Naive thymus-derived CD4-positive, alpha-beta T cell (primary cell): ENCODE measurements at regions of chr7 and their contacts with region 1.

Region 1: DNA sequence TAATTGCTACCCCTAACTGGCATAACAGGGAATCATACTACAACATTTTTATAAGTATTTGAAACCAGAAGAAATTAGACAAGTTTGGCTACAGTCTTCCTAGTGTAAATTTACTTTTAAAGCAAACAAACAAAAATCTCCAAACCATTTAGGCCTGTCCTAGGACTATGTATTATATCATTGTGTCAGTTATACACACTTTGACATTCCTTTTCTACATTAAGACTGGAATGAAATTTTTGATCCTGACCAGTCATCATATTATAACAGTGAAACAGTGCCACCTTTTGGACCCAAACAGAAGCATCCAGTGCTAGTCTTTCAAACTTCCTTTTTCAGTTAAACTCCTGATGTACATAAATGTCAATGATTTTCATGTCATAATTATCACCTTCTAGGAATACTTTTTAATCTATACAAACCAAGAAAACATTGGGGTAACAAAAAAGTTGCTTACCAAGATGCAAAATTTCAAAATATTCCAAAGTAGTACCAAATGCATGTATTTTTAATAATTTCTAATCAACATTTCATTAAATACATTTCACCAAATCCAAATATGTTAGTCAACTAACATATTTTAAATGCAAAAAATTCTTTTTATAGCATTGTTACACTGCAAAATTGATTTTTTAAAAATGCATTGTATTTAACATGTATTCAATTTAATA is 75.7 kb downstream of the IMMP2L start:
- DNase-seq: peak in 5 of 9 donors; percentile 12 to 33 (median 29)
- ATAC-seq: no peak
- H3K4me3 ChIP-seq: no peak overlapping the region
- H3K4me3 Mint-ChIP-seq: no peak overlapping the region
- H3K27ac ChIP-seq: no peak overlapping the region
- H3K27ac Mint-ChIP-seq: no peak overlapping the region
- H3K4me1 ChIP-seq: no peaks in the 10 kb centered on the region
- H3K4me1 Mint-ChIP-seq: peaks cover 0 to 3% (median 0%) of the 10 kb centered on the region in 7 donors
- H3K27me3 ChIP-seq: no peaks in the 10 kb centered on the region
- H3K27me3 Mint-ChIP-seq: no peaks in the 10 kb centered on the region

Region 2: DNA sequence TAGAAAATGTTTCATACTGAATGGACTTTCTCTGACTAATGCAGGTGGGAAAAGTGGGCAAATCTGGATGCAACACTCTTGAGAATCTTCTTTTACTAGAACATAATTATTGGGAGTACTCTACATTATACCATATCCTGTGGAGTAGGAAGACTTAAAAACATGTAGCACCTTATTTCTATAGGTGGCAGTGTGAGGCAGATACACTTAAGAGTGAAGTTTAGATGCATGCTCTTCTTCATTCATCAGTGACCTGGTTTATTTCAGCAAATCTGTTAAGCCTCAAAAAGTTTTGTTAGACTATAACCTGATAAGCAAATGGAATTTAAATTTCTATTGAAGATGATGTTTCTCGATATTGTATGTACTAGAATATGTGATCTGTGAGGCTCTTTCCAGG is 1482.8 kb before region 1 on chr7:
- CTCF ChIA-PET with region 1: no interaction called
- POLR2A ChIA-PET with region 1: no interaction called
- intact Hi-C with region 1: loop called in 1 of 2 experiments (anchors 2 kb)
- DNase-seq: no peak
- ATAC-seq: no peak
- H3K4me3 ChIP-seq: no peak overlapping the region
- H3K4me3 Mint-ChIP-seq: no peak overlapping the region
- H3K27ac ChIP-seq: no peak overlapping the region
- H3K27ac Mint-ChIP-seq: no peak overlapping the region
- H3K4me1 ChIP-seq: no peaks in the 10 kb centered on the region
- H3K4me1 Mint-ChIP-seq: no peaks in the 10 kb centered on the region
- H3K27me3 ChIP-seq: no peaks in the 10 kb centered on the region
- H3K27me3 Mint-ChIP-seq: peaks cover 0 to 7% (median 0%) of the 10 kb centered on the region in 5 donors

Region 3: DNA sequence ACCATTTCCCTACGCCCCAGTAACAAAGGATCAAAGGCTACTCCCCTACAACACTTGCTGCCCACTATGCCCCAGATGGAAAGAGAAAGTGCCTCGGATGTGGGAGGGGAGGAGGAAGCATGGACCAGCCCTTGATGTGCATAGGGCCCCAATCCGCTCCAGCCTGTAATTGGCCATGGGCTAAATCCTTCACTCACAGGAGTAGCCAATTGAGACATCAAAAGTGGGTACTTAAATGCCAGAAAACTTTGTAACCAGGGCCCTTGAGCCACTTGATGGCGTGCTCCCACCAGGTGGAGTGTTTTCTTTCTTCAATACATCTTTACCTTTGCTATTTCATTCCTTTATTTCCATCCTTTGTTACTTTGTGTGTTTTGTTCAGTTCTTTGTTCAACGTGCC is 896.2 kb before region 1 on chr7:
- CTCF ChIA-PET with region 1: no interaction called
- POLR2A ChIA-PET with region 1: no interaction called
- intact Hi-C with region 1: loop called (anchors 1 to 2 kb)
- DNase-seq: peak in 4 of 9 donors; percentile 4 to 11 (median 10)
- ATAC-seq: no peak
- H3K4me3 ChIP-seq: no peak overlapping the region
- H3K4me3 Mint-ChIP-seq: no peak overlapping the region
- H3K27ac ChIP-seq: no peak overlapping the region
- H3K27ac Mint-ChIP-seq: no peak overlapping the region
- H3K4me1 ChIP-seq: no peaks in the 10 kb centered on the region
- H3K4me1 Mint-ChIP-seq: peaks cover 0 to 7% (median 0%) of the 10 kb centered on the region in 7 donors
- H3K27me3 ChIP-seq: no peaks in the 10 kb centered on the region
- H3K27me3 Mint-ChIP-seq: peaks cover 0 to 4% (median 0%) of the 10 kb centered on the region in 5 donors

Region 4: GRCh38 chr7:110870926-110871325 is 615.7 kb before region 1 on chr7:
- CTCF ChIA-PET with region 1: no interaction called
- POLR2A ChIA-PET with region 1: no interaction called
- intact Hi-C with region 1: loop called in 1 of 2 experiments (anchors 10 kb)
- DNase-seq: no peak
- ATAC-seq: no peak
- H3K4me3 ChIP-seq: no peak overlapping the region
- H3K4me3 Mint-ChIP-seq: no peak overlapping the region
- H3K27ac ChIP-seq: no peak overlapping the region
- H3K27ac Mint-ChIP-seq: no peak overlapping the region
- H3K4me1 ChIP-seq: no peaks in the 10 kb centered on the region
- H3K4me1 Mint-ChIP-seq: peaks cover 0 to 9% (median 0%) of the 10 kb centered on the region in 7 donors
- H3K27me3 ChIP-seq: no peaks in the 10 kb centered on the region
- H3K27me3 Mint-ChIP-seq: no peaks in the 10 kb centered on the region

Region 5: GRCh38 chr7:110977127-110977737 is 509.4 kb before region 1 on chr7:
- CTCF ChIA-PET with region 1: no interaction called
- POLR2A ChIA-PET with region 1: no interaction called
- intact Hi-C with region 1: no loop called
- DNase-seq: peak in 6 of 9 donors; percentile 17 to 53 (median 43)
- ATAC-seq: peak; percentile 57
- H3K4me3 ChIP-seq: no peak overlapping the region
- H3K4me3 Mint-ChIP-seq: peak overlapping the region; percentile 18 to 83 (median 71)
- H3K27ac ChIP-seq: peak overlapping the region; percentile 51
- H3K27ac Mint-ChIP-seq: peak overlapping the region; percentile 63 to 95 (median 82)
- H3K4me1 ChIP-seq: peaks cover 10 to 20% of the 10 kb centered on the region in 2 donors
- H3K4me1 Mint-ChIP-seq: peaks cover 10 to 76% (median 54%) of the 10 kb centered on the region in 7 donors
- H3K27me3 ChIP-seq: no peaks in the 10 kb centered on the region
- H3K27me3 Mint-ChIP-seq: no peaks in the 10 kb centered on the region

Region 6: GRCh38 chr7:111735661-111736551 is 249.3 kb after region 1 on chr7:
- CTCF ChIA-PET with region 1: no interaction called
- POLR2A ChIA-PET with region 1: no interaction called
- intact Hi-C with region 1: loop called (anchors 1 to 10 kb)
- DNase-seq: peak in 8 of 9 donors; percentile 24 to 66 (median 46)
- ATAC-seq: peak; percentile 67
- H3K4me3 ChIP-seq: no peak overlapping the region
- H3K4me3 Mint-ChIP-seq: no peak overlapping the region
- H3K27ac ChIP-seq: no peak overlapping the region
- H3K27ac Mint-ChIP-seq: no peak overlapping the region
- H3K4me1 ChIP-seq: no peaks in the 10 kb centered on the region
- H3K4me1 Mint-ChIP-seq: no peaks in the 10 kb centered on the region
- H3K27me3 ChIP-seq: no peaks in the 10 kb centered on the region
- H3K27me3 Mint-ChIP-seq: peaks cover 2 to 23% (median 10%) of the 10 kb centered on the region in 5 donors

Region 7: DNA sequence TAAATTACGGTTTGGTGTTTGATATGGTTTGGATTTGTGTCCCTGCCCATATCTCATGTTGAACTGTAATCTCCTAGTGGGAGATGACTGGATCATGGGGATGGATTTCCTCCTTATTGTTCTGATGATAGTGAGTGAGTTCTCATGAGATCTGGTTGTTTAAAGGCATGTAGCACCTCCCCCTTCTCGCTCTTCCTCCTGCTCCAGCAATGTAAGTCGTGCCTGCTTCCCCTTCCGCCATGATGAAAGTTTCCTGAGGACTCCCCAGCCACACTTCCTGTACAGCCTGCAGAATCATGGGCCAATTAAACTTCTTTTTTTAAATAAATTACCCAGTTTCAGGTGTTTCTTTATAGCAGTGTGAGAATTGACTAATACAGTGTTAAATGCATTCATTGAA is 602.9 kb after region 1 on chr7:
- CTCF ChIA-PET with region 1: no interaction called
- POLR2A ChIA-PET with region 1: no interaction called
- intact Hi-C with region 1: no loop called
- DNase-seq: no peak
- ATAC-seq: no peak
- H3K4me3 ChIP-seq: no peak overlapping the region
- H3K4me3 Mint-ChIP-seq: no peak overlapping the region
- H3K27ac ChIP-seq: no peak overlapping the region
- H3K27ac Mint-ChIP-seq: no peak overlapping the region
- H3K4me1 ChIP-seq: no peaks in the 10 kb centered on the region
- H3K4me1 Mint-ChIP-seq: no peaks in the 10 kb centered on the region
- H3K27me3 ChIP-seq: no peaks in the 10 kb centered on the region
- H3K27me3 Mint-ChIP-seq: peaks cover 4 to 19% (median 16%) of the 10 kb centered on the region in 5 donors